BJ (cell line): ENCODE measurements at regions of chr10 and their contacts with region 1.

Region 1: GRCh38 chr10:13984647-13985155 is 346.0 kb downstream of the FRMD4A start:
- DNase-seq: peak; percentile 85
- H3K4me3 ChIP-seq: no peak overlapping the region
- H3K27me3 ChIP-seq: no peaks in the 10 kb centered on the region
- CTCF ChIP-seq: no peak

Region 2: GRCh38 chr10:13877154-13877909 is 107.4 kb before region 1 on chr10:
- CTCF ChIA-PET with region 1: no interaction called
- POLR2A ChIA-PET with region 1: no interaction called
- DNase-seq: no peak
- H3K4me3 ChIP-seq: no peak overlapping the region
- H3K27me3 ChIP-seq: no peaks in the 10 kb centered on the region
- CTCF ChIP-seq: no peak

Region 3: DNA sequence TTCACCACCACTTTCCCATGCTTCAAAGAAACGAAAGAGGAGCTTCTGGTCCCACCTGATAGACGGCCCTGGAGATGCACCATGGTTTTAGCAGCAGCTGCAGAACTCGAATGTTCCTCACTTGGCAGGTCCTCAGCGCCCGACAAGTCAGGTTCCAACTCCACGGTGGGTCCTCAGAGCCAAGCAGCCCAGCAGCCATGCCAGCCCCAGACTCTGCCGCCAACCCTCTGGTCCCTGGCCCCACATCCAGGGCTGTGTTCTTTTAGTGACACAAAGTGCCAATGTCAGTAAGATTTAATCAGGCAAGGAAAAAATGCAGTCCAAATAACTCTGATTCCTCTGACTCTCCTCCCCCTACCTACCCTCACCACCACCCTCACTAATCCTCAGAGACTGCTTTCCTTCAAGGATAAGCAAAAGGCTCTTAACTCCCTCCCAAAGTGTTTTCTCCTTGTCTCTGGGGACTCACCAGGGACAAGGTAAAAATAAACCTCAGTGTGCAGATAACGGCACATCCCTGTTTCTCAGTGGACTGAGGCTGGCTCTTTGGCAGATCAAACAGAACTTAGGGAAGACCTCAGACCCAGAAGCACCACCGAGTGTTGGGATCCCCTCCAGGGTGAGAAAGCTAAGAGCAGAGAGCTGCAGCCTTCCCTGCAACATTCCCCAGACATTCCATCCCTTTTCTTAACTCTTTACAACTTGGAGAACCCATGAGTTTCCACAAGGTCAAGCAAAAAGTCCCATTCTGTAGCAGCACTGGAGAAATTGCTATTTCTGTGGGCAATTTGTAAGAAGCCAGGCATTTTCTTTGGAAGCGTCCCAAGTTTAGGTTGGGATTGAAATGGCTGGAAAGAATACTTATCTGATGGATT is 12.9 kb before region 1 on chr10:
- CTCF ChIA-PET with region 1: no interaction called
- POLR2A ChIA-PET with region 1: interaction called, 11 read pairs
- DNase-seq: no peak
- H3K4me3 ChIP-seq: no peak overlapping the region
- H3K27me3 ChIP-seq: no peaks in the 10 kb centered on the region
- CTCF ChIP-seq: no peak